Gastrocnemius medialis (tissue), 4 donors: ENCODE measurements at regions of chr5 and their contacts with region 1.

Region 1: GRCh38 chr5:16013334-16014065 is 166.1 kb downstream of the MARCHF11 start:
- DNase-seq: no peak
- ATAC-seq: no peak
- H3K4me3 ChIP-seq: no peak overlapping the region
- H3K27ac ChIP-seq: no peak overlapping the region
- H3K4me1 ChIP-seq: no peaks in the 10 kb centered on the region
- H3K27me3 ChIP-seq: no peaks in the 10 kb centered on the region
- CTCF ChIP-seq: no peak
- POLR2A ChIP-seq: no peak

Region 2: GRCh38 chr5:15074651-15075050 is 938.8 kb before region 1 on chr5:
- in situ Hi-C with region 1: loop called in 1 of 4 experiments (anchors 25 kb)
- intact Hi-C with region 1: no loop called
- DNase-seq: no peak
- ATAC-seq: no peak
- H3K4me3 ChIP-seq: no peak overlapping the region
- H3K27ac ChIP-seq: no peak overlapping the region
- H3K4me1 ChIP-seq: no peaks in the 10 kb centered on the region
- H3K27me3 ChIP-seq: no peaks in the 10 kb centered on the region
- CTCF ChIP-seq: no peak
- POLR2A ChIP-seq: no peak

Region 3: GRCh38 chr5:15463231-15463980 is 550.1 kb before region 1 on chr5:
- in situ Hi-C with region 1: no loop called
- intact Hi-C with region 1: no loop called
- DNase-seq: no peak
- ATAC-seq: no peak
- H3K4me3 ChIP-seq: no peak overlapping the region
- H3K27ac ChIP-seq: no peak overlapping the region
- H3K4me1 ChIP-seq: no peaks in the 10 kb centered on the region
- H3K27me3 ChIP-seq: no peaks in the 10 kb centered on the region
- CTCF ChIP-seq: peak in 2 of 5 experiments; percentile 4 to 28
- POLR2A ChIP-seq: no peak

Region 4: GRCh38 chr5:16120579-16120978 is 107.1 kb after region 1 on chr5:
- in situ Hi-C with region 1: no loop called
- intact Hi-C with region 1: no loop called
- DNase-seq: no peak
- ATAC-seq: no peak
- H3K4me3 ChIP-seq: no peak overlapping the region
- H3K27ac ChIP-seq: no peak overlapping the region
- H3K4me1 ChIP-seq: no peaks in the 10 kb centered on the region
- H3K27me3 ChIP-seq: no peaks in the 10 kb centered on the region
- CTCF ChIP-seq: no peak
- POLR2A ChIP-seq: no peak